Naive thymus-derived CD4-positive, alpha-beta T cell (primary cell): ENCODE measurements at regions of chr4 and their contacts with region 1.

Region 1: DNA sequence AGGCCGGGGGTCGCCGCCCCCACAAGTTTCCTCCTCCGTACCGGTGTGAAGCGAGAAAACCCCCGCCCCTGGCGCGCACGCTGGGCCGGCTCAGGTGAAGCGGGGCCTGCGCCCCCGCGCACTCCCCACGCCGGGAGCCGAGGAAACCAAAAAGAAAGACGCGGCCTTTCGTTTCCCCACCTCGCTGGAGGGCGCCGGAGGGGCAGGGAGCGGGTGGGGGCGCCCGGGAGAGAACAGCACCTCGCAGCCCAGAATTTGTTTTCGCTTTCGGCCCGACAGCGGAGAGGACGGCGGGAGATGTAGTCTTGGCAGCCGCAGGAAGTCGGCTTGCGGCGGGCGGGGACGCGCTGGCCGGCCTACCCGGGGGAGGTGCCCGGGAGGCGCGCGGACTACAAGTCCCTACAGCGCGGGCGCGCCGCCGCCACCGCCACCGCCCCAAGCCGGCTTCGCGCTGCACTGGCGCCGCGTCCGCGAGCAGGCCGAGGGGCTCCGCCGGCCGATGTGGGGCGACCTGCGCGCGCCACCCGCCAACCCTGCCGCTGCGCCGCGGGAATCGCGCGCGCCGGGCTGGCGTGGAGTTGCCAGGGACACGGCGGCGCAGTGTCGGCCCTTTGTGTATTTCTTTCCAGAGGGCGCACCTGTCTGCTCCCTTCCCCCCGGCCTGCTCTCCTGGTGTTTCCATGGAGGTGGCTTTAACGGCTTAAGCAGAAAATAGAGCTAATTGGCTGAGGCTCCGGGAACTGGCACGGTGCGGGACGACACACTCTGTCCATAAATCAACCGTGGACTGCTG is at the start of gene OTUD4:
- DNase-seq: peak; percentile 89 to 97 (median 95)
- ATAC-seq: peak; percentile 93
- H3K4me3 ChIP-seq: peak within 1 kb of the TSS; percentile 81
- H3K4me3 Mint-ChIP-seq: peak within 1 kb of the TSS; percentile 80 to 98 (median 97)
- H3K27ac ChIP-seq: peak within 1 kb of the TSS; percentile 96
- H3K27ac Mint-ChIP-seq: peak within 1 kb of the TSS; percentile 94 to 98 (median 97)
- H3K4me1 ChIP-seq: peaks cover 21 to 31% of the 10 kb centered on the region in 2 donors
- H3K4me1 Mint-ChIP-seq: peaks cover 21 to 35% (median 30%) of the 10 kb centered on the region in 7 donors
- H3K27me3 ChIP-seq: no peaks in the 10 kb centered on the region
- H3K27me3 Mint-ChIP-seq: peaks cover 0 to 3% (median 0%) of the 10 kb centered on the region in 5 donors
- total RNA-seq, gene OTUD4: 49.2 to 65.4 (median 59.9) TPM

Region 2: GRCh38 chr4:144174401-144175067 is 1006.0 kb before region 1 on chr4:
- CTCF ChIA-PET with region 1: interaction called, 6 read pairs
- POLR2A ChIA-PET with region 1: no interaction called
- intact Hi-C with region 1: loop called in 1 of 2 experiments (anchors 10 kb)
- DNase-seq: peak in 7 of 9 donors; percentile 10 to 62 (median 45)
- ATAC-seq: peak; percentile 63
- H3K4me3 ChIP-seq: no peak overlapping the region
- H3K4me3 Mint-ChIP-seq: peak overlapping the region in 1 of 10 donors; percentile 44
- H3K27ac ChIP-seq: no peak overlapping the region
- H3K27ac Mint-ChIP-seq: peak overlapping the region in 3 of 9 donors; percentile 25 to 84 (median 41)
- H3K4me1 ChIP-seq: peaks cover 0 to 3% of the 10 kb centered on the region in 2 donors
- H3K4me1 Mint-ChIP-seq: peaks cover 0 to 29% (median 4%) of the 10 kb centered on the region in 7 donors
- H3K27me3 ChIP-seq: no peaks in the 10 kb centered on the region
- H3K27me3 Mint-ChIP-seq: peaks cover 0 to 11% (median 9%) of the 10 kb centered on the region in 5 donors

Region 3: GRCh38 chr4:145132511-145133098 is 47.9 kb before region 1 on chr4:
- CTCF ChIA-PET with region 1: no interaction called
- POLR2A ChIA-PET with region 1: no interaction called
- intact Hi-C with region 1: loop called in 1 of 2 experiments (anchors 2 kb)
- DNase-seq: no peak
- ATAC-seq: no peak
- H3K4me3 ChIP-seq: no peak overlapping the region
- H3K4me3 Mint-ChIP-seq: peak overlapping the region in 1 of 10 donors; percentile 52
- H3K27ac ChIP-seq: no peak overlapping the region
- H3K27ac Mint-ChIP-seq: peak overlapping the region; percentile 16 to 87 (median 61)
- H3K4me1 ChIP-seq: peaks cover 0 to 3% of the 10 kb centered on the region in 2 donors
- H3K4me1 Mint-ChIP-seq: peaks cover 9 to 75% (median 31%) of the 10 kb centered on the region in 7 donors
- H3K27me3 ChIP-seq: no peaks in the 10 kb centered on the region
- H3K27me3 Mint-ChIP-seq: no peaks in the 10 kb centered on the region

Region 4: GRCh38 chr4:145168581-145169187 is 11.8 kb before region 1 on chr4:
- CTCF ChIA-PET with region 1: no interaction called
- POLR2A ChIA-PET with region 1: interaction called, 5 read pairs
- intact Hi-C with region 1: loop called in 1 of 2 experiments (anchors 1 kb)
- DNase-seq: no peak
- ATAC-seq: no peak
- H3K4me3 ChIP-seq: no peak overlapping the region
- H3K4me3 Mint-ChIP-seq: no peak overlapping the region
- H3K27ac ChIP-seq: no peak overlapping the region
- H3K27ac Mint-ChIP-seq: peak overlapping the region in 2 of 9 donors; percentile 10 to 41
- H3K4me1 ChIP-seq: no peaks in the 10 kb centered on the region
- H3K4me1 Mint-ChIP-seq: peaks cover 5 to 36% (median 23%) of the 10 kb centered on the region in 7 donors
- H3K27me3 ChIP-seq: no peaks in the 10 kb centered on the region
- H3K27me3 Mint-ChIP-seq: no peaks in the 10 kb centered on the region

Region 5: DNA sequence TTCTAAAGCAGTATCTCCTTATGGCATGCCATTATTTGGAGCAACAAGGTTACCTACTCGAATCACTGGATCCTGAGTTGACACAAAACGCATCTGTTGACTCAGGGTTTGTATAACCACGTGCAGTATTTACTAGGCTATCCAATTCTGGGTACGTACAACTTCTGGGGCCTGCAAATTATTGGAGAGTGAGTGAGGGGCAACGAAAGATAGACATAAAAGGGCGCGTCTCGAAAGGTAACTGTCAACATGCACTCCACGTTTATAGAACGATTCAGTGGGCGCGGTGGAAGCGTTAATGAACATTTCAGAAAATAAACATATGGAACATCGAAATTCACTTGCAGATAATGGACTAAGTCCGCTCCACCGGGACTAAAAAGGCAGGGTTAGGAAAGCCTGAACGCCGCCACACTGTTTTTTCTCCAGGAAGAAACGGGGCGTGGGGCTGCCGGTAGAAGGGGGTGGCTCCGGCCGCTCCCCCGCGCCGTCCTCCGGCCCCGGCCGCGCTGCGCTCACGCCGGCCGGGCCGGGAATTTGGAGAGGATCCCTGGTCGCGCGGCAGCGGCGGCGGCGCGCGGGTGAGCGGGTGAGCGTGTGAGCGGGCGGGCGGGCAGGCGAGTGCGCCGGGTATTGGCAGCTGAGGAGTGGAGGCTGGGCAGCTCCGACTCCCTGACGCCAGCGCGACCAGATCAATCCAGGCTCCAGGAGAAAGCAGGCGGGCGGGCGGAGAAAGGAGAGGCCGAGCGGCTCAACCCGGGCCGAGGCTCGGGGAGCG is 300.9 kb after region 1 on chr4 and contains the start of gene SMAD1:
- CTCF ChIA-PET with region 1: no interaction called
- POLR2A ChIA-PET with region 1: no interaction called
- intact Hi-C with region 1: loop called in 1 of 2 experiments (anchors 1 kb)
- DNase-seq: peak in 7 of 9 donors; percentile 11 to 53 (median 18)
- ATAC-seq: peak; percentile 76
- H3K4me3 ChIP-seq: peak within 1 kb of the TSS; percentile 58
- H3K4me3 Mint-ChIP-seq: peak within 1 kb of the TSS in 7 of 10 donors; percentile 68 to 91 (median 87)
- H3K27ac ChIP-seq: no peak within 1 kb of the TSS
- H3K27ac Mint-ChIP-seq: peak within 1 kb of the TSS in 4 of 9 donors; percentile 6 to 71 (median 22)
- H3K4me1 ChIP-seq: peaks cover 0 to 4% of the 10 kb centered on the region in 2 donors
- H3K4me1 Mint-ChIP-seq: peaks cover 4 to 15% (median 10%) of the 10 kb centered on the region in 7 donors
- H3K27me3 ChIP-seq: peaks cover 0 to 4% of the 10 kb centered on the region in 2 donors
- H3K27me3 Mint-ChIP-seq: peaks cover 4 to 42% (median 31%) of the 10 kb centered on the region in 5 donors
- total RNA-seq, gene SMAD1: 0.29 to 13.5 (median 1.2) TPM

Region 6: DNA sequence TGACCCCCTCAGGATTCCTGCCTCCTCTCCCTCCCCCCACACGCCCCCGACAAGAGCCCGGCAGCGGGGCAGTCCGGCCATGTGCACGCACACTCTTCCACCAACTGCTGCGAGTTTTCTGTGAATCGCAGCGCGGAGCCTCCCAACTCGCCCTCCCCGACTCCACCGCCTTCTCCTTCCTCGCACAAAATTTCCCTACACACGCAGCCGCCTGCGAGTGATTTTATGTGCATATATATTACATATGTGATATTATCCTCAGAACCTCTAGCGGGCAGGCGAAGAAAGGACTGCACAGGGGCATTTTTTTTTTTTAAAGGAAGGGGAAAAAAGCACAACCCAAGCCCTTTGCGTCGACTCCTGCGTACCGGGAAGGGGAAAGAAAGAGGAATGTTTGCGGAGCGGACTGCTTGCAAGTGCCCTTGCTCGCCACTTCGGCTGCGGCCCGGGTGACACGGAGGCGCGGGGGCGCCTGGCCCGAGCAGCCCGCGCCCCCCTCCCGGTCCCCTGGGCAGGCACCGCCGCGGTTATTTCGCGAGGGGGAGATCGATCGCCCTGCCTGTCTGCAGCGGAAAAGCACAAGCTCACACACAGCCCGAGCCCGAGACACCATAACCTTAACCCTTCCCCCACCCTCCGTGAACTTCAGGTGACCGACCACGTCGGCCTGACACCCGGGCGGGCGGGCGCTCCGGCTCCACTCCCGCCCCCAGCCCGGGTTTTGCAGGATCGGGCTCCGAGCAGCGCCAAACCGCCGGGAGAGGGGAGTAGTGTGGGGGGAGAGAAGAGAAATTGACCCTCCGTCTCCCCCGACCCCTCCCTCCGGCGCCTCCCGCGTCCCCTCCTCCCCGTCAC is 755.9 kb after region 1 on chr4:
- CTCF ChIA-PET with region 1: no interaction called
- POLR2A ChIA-PET with region 1: no interaction called
- intact Hi-C with region 1: loop called (anchors 1 kb)
- DNase-seq: peak; percentile 35 to 71 (median 66)
- ATAC-seq: peak; percentile 70
- H3K4me3 ChIP-seq: peak overlapping the region; percentile 77
- H3K4me3 Mint-ChIP-seq: peak overlapping the region; percentile 92 to 100 (median 95)
- H3K27ac ChIP-seq: peak overlapping the region; percentile 68
- H3K27ac Mint-ChIP-seq: peak overlapping the region; percentile 87 to 98 (median 93)
- H3K4me1 ChIP-seq: peaks cover 0 to 13% of the 10 kb centered on the region in 2 donors
- H3K4me1 Mint-ChIP-seq: peaks cover 26 to 49% (median 40%) of the 10 kb centered on the region in 7 donors
- H3K27me3 ChIP-seq: no peaks in the 10 kb centered on the region
- H3K27me3 Mint-ChIP-seq: peaks cover 0 to 8% (median 0%) of the 10 kb centered on the region in 5 donors